Transverse colon (tissue), 4 donors: ENCODE measurements at regions of chr14 and their contacts with region 1.

Region 1: GRCh38 chr14:99752486-99753121 is 40.6 kb upstream of the EML1 start:
- DNase-seq: no peak
- H3K4me3 ChIP-seq: no peak overlapping the region
- H3K27ac ChIP-seq: peak overlapping the region; percentile 78 to 83 (median 80)
- H3K4me1 ChIP-seq: peaks cover 33 to 62% (median 41%) of the 10 kb centered on the region in 4 donors
- H3K27me3 ChIP-seq: peaks cover 7% of the 10 kb centered on the region
- CTCF ChIP-seq: no peak
- EP300 ChIP-seq: no peak
- POLR2A ChIP-seq: no peak

Region 2: DNA sequence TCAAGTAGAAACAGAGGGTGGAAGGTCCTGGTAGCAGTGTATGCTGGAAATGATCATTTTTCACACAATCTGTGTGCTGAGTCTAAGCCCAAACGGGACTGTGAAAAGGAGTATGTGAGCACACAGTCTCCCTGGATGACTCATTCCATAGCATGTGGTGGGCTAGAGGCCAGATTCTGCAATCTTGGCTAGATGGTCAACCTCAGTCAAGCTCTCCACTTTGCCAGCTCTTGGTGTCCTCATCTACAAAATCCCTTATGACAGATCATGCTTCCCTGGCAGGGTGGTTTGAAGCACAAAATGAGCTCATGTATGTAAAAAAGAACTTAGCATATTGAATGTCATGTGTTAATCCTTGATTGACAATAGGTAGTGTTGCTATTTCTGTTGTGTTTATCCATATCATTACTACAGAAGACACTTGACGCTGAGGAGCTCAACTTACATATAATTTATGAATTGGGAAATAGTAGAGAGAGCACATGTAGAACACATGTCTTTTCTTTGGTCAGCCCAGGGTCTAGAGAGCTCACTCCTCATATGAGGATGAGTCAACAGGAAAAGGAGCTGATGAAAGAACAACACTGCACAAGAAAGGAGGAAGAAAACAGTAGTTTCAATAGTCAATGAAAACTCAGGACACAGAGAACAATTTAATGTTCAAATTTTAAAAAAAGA is 998.1 kb before region 1 on chr14:
- in situ Hi-C with region 1: no loop called
- intact Hi-C with region 1: no loop called
- DNase-seq: no peak
- H3K4me3 ChIP-seq: no peak overlapping the region
- H3K27ac ChIP-seq: no peak overlapping the region
- H3K4me1 ChIP-seq: no peaks in the 10 kb centered on the region
- H3K27me3 ChIP-seq: no peaks in the 10 kb centered on the region
- CTCF ChIP-seq: no peak
- EP300 ChIP-seq: no peak
- POLR2A ChIP-seq: no peak

Region 3: GRCh38 chr14:99786511-99786989 is 33.9 kb after region 1 on chr14:
- in situ Hi-C with region 1: no loop called
- intact Hi-C with region 1: loop called (anchors 5 kb)
- DNase-seq: no peak
- H3K4me3 ChIP-seq: no peak overlapping the region
- H3K27ac ChIP-seq: peak overlapping the region; percentile 7 to 91 (median 86)
- H3K4me1 ChIP-seq: peaks cover 0 to 6% (median under 1%) of the 10 kb centered on the region in 4 donors
- H3K27me3 ChIP-seq: peaks cover 10% of the 10 kb centered on the region
- CTCF ChIP-seq: no peak
- EP300 ChIP-seq: peak; percentile 51
- POLR2A ChIP-seq: no peak